Common myeloid progenitor, CD34-positive (primary cell): ENCODE measurements at regions of chr5 and their contacts with region 1.

Region 1: DNA sequence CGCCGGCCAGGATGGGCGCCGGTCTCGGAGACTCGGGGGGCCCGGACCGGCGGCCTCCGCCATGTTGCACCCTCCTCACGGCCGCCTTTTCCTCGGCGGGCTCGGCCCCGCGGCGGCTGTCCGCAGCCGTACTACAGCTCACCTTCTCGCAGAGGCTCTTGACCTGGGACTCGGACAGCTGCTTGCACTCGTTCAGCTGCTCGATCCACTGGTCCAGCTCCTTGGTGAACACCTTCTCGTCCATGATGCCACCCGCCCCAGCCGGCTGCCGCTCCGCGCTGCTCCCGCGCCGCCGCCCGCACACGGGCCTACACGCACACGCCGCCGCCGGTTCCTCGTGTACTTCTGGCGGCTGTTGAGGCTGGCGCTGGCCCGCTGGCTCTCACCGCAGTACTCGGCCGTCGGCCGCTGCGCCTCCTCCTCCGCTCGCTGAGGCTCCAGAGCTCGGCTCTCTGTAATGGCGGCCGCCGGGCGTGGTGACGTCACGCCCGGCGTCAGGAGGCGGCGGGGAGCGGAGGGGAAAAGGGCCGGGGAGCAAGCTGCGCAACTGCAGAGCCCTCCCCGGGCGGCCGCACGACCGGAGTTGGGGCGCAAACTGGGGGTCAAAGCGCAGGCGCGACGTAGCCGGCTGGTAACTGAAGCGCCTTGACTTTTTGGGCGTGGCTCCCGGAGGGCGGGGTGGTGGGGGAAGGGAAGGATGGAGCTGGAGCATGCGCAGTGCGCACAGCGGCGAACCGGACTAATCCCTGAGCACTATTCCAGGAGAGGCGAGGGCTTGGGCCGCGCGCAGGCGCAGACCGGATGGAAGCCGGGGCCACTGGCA is at the start of gene PPP2CA:
- DNase-seq: peak; percentile 98 to 99 (median 99)
- H3K4me3 ChIP-seq: peak within 1 kb of the TSS; percentile 95 to 100 (median 98)
- H3K27ac ChIP-seq: peak within 1 kb of the TSS; percentile 99 to 100
- H3K4me1 ChIP-seq: peaks cover 25 to 44% (median 33%) of the 10 kb centered on the region in 4 experiments
- H3K27me3 ChIP-seq: no peaks in the 10 kb centered on the region

Region 2: GRCh38 chr5:134176511-134177368 is 49.1 kb before region 1 on chr5 and contains the start of gene SKP1:
- CTCF ChIA-PET with region 1: no interaction called
- POLR2A ChIA-PET with region 1: interaction called, 10 read pairs
- DNase-seq: peak; percentile 86 to 92 (median 91)
- H3K4me3 ChIP-seq: peak within 1 kb of the TSS; percentile 71 to 99 (median 91)
- H3K27ac ChIP-seq: peak within 1 kb of the TSS; percentile 99 to 100
- H3K4me1 ChIP-seq: peaks cover 18 to 25% (median 20%) of the 10 kb centered on the region in 4 experiments
- H3K27me3 ChIP-seq: no peaks in the 10 kb centered on the region

Region 3: DNA sequence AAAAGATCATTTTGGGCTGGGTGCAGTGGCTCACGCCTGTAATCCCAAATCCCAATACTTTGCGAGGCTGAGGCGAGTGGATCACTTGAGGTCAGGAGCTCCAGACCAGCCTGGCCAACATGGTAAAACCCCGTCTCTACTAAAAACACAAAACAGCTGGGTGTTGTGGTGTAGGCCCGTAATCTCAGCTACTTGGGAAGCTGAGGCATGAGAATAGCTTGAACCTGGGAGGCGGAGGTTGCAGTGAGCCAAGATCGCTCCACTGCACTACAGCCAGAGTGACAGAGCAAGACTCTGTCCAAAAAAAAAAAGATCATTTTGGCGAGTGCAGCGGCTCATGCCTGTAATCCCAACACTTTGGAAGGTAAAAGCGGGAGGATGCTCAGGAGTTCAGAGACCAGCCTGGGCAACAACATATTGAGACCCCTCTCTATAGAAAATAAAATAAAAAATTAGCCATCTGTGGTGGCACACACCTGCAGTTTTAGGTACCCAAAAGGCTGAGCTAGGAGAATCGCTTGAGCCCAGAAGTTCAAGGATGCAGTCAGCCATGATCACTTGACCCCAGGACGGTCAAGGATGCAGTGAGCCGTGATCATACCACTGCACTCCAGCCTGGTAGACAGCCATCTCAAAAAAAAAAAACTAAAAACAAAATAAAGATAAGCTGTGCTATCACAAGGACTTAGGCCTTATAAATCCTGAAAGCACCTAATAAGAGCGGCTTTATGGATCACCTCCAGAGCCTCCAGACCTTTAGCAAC is 16.2 kb before region 1 on chr5:
- CTCF ChIA-PET with region 1: interaction called, 16 read pairs
- POLR2A ChIA-PET with region 1: interaction called, 12 read pairs
- DNase-seq: no peak
- H3K4me3 ChIP-seq: no peak overlapping the region
- H3K27ac ChIP-seq: no peak overlapping the region
- H3K4me1 ChIP-seq: no peaks in the 10 kb centered on the region
- H3K27me3 ChIP-seq: no peaks in the 10 kb centered on the region